ENCODE measurements at regions of chr2 and their contacts with region 1.

Region 1: GRCh38 chr2:166960702-166961270 is 72.5 kb downstream of the XIRP2 start:
- DNase-seq: no peak
- ATAC-seq: no peak
- H3K4me3 Mint-ChIP-seq: no peak overlapping the region
- H3K27ac Mint-ChIP-seq: no peak overlapping the region
- H3K4me1 Mint-ChIP-seq: peaks cover 4% of the 10 kb centered on the region
- H3K27me3 Mint-ChIP-seq: no peaks in the 10 kb centered on the region

Region 2: GRCh38 chr2:166942377-166942776 is 18.4 kb before region 1 on chr2:
- CTCF ChIA-PET with region 1: no interaction called
- POLR2A ChIA-PET with region 1: no interaction called
- intact Hi-C with region 1: loop called in 1 of 2 experiments (anchors 2 kb)
- DNase-seq: no peak
- ATAC-seq: no peak
- H3K4me3 Mint-ChIP-seq: no peak overlapping the region
- H3K27ac Mint-ChIP-seq: no peak overlapping the region
- H3K4me1 Mint-ChIP-seq: no peaks in the 10 kb centered on the region
- H3K27me3 Mint-ChIP-seq: no peaks in the 10 kb centered on the region

Measured in activated CD4-positive, alpha-beta T cell treated with anti-CD3 and anti-CD28 coated beads for 36 hours (primary cell).